ENCODE measurements at regions of chr12 and their contacts with region 1.

Region 1: GRCh38 chr12:119902084-119902509 is 25.0 kb upstream of the CIT start:
- DNase-seq: peak; percentile 88
- ATAC-seq: peak; percentile 99
- H3K4me3 Mint-ChIP-seq: no peak overlapping the region
- H3K27ac Mint-ChIP-seq: no peak overlapping the region
- H3K4me1 Mint-ChIP-seq: peaks cover 8% of the 10 kb centered on the region
- H3K27me3 Mint-ChIP-seq: no peaks in the 10 kb centered on the region

Region 2: GRCh38 chr12:119695034-119695433 is 207.1 kb before region 1 on chr12:
- CTCF ChIA-PET with region 1: interaction called, 4 read pairs
- POLR2A ChIA-PET with region 1: no interaction called
- intact Hi-C with region 1: loop called in 1 of 2 experiments (anchors 10 kb)
- DNase-seq: no peak
- ATAC-seq: no peak
- H3K4me3 Mint-ChIP-seq: no peak overlapping the region
- H3K27ac Mint-ChIP-seq: no peak overlapping the region
- H3K4me1 Mint-ChIP-seq: no peaks in the 10 kb centered on the region
- H3K27me3 Mint-ChIP-seq: no peaks in the 10 kb centered on the region

Region 3: GRCh38 chr12:119876761-119877638 is 25.1 kb before region 1 on chr12 and contains the start of gene CIT:
- CTCF ChIA-PET with region 1: interaction called, 3 read pairs
- POLR2A ChIA-PET with region 1: no interaction called
- intact Hi-C with region 1: loop called in 1 of 2 experiments (anchors 2 kb)
- DNase-seq: peak; percentile 93
- ATAC-seq: peak; percentile 100
- H3K4me3 Mint-ChIP-seq: peak within 1 kb of the TSS; percentile 82
- H3K27ac Mint-ChIP-seq: peak within 1 kb of the TSS; percentile 63
- H3K4me1 Mint-ChIP-seq: peaks cover 13% of the 10 kb centered on the region
- H3K27me3 Mint-ChIP-seq: no peaks in the 10 kb centered on the region
- total RNA-seq, gene CIT: 54.6 to 71.5 TPM

Region 4: DNA sequence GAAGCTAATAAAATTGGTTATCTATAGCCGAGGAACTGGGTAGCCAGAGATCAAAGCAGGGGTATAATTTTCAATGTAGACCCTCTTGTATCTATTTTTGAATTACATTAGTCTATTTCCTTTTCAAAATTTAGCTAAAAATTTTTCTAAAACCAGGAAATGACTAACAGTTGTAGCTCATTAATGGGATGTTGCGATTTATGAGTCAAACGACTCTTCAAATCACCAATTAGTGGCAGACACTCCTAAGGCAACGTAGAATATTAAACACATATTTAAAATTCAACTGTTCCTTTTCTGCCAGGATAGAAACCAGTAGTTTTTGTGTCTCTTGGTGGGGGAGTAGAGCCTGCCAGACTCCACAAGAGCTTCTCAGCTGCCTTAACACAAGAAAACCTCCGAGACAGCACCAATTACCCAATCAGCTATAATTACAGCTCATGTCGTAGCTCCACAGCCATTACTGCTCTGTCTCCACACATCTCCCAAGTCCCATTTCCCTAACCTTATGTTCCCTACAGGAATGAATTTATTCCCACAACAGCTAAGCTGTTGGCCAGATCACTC is 265.5 kb after region 1 on chr12:
- CTCF ChIA-PET with region 1: no interaction called
- POLR2A ChIA-PET with region 1: no interaction called
- intact Hi-C with region 1: no loop called
- DNase-seq: no peak
- ATAC-seq: no peak
- H3K4me3 Mint-ChIP-seq: no peak overlapping the region
- H3K27ac Mint-ChIP-seq: no peak overlapping the region
- H3K4me1 Mint-ChIP-seq: no peaks in the 10 kb centered on the region
- H3K27me3 Mint-ChIP-seq: no peaks in the 10 kb centered on the region